H1 (cell line): ENCODE measurements at regions of chr18 and their contacts with region 1.

Region 1: GRCh38 chr18:70195852-70196434 is 9.5 kb downstream of the RTTN start:
- DNase-seq: no peak
- H3K4me3 ChIP-seq: no peak overlapping the region
- H3K27ac ChIP-seq: no peak overlapping the region
- H3K4me1 ChIP-seq: no peaks in the 10 kb centered on the region
- H3K27me3 ChIP-seq: peaks cover 0 to 1% (median 0%) of the 10 kb centered on the region in 4 experiments; a peak in 1 of 7 replicates
- CTCF ChIP-seq: peak in 2 of 3 experiments; percentile 71 to 73; a peak in 3 of 4 replicates
- EP300 ChIP-seq: no peak
- POLR2A ChIP-seq: no peak
- RAD21 ChIP-seq: peak; percentile 76 to 81

Region 2: GRCh38 chr18:70183441-70183840 is 12.5 kb before region 1 on chr18:
- CTCF ChIA-PET with region 1: interaction called, 22 read pairs
- POLR2A ChIA-PET with region 1: no interaction called
- DNase-seq: no peak
- H3K4me3 ChIP-seq: no peak overlapping the region
- H3K27ac ChIP-seq: no peak overlapping the region
- H3K4me1 ChIP-seq: no peaks in the 10 kb centered on the region
- H3K27me3 ChIP-seq: no peaks in the 10 kb centered on the region
- CTCF ChIP-seq: no peak
- EP300 ChIP-seq: no peak
- POLR2A ChIP-seq: no peak
- RAD21 ChIP-seq: no peak

Region 3: GRCh38 chr18:70442933-70443332 is 247.0 kb after region 1 on chr18:
- CTCF ChIA-PET with region 1: interaction called, 20 read pairs
- POLR2A ChIA-PET with region 1: no interaction called
- DNase-seq: no peak
- H3K4me3 ChIP-seq: no peak overlapping the region
- H3K27ac ChIP-seq: 0 out of 2 replicates have a peak overlapping the region, but pooled peaks have one; percentile 31
- H3K4me1 ChIP-seq: peaks cover 0 to 8% (median 0%) of the 10 kb centered on the region in 4 experiments; a peak in 1 of 7 replicates
- H3K27me3 ChIP-seq: no peaks in the 10 kb centered on the region
- CTCF ChIP-seq: no peak
- EP300 ChIP-seq: no peak
- POLR2A ChIP-seq: no peak
- RAD21 ChIP-seq: no peak

Region 4: DNA sequence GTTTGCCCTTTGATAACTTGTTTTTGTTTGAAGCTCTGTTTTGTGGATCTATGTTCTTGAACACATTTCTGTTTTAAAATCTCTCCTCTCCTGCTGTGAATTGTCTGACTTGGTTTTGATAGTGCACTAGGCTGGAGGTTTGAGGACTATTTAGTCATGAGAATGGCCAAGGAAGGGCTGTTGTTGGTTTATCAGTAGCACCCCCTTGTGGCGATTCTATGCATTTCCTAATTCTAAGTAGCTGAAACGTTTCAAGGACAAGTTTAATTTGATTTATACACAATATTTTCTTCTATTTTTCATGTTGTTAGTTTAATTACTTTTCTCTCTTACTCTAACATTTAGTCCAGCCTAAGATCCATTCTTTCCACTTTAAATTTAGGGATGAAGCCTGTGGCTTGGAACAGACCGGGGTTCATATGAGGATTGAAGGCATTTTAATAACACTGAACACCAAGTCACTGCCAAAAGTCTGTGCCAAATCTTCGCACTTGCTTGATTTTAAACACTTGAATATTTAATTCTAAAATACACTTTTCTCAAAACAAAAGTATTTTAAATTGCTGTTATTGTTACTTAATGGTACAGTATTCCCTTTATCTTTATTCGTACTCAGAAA is 258.9 kb after region 1 on chr18:
- CTCF ChIA-PET with region 1: interaction called, 84 read pairs
- POLR2A ChIA-PET with region 1: no interaction called
- DNase-seq: no peak
- H3K4me3 ChIP-seq: no peak overlapping the region
- H3K27ac ChIP-seq: no peak overlapping the region
- H3K4me1 ChIP-seq: peaks cover 0 to 11% (median 0%) of the 10 kb centered on the region in 4 experiments; a peak in 2 of 7 replicates
- H3K27me3 ChIP-seq: no peaks in the 10 kb centered on the region
- CTCF ChIP-seq: peak in 2 of 3 experiments; percentile 56 to 72; a peak in 3 of 4 replicates
- EP300 ChIP-seq: no peak
- POLR2A ChIP-seq: no peak
- RAD21 ChIP-seq: peak; percentile 72 to 73